HEK293 (cell line): ENCODE measurements at regions of chr9 and their contacts with region 1.

Region 1: DNA sequence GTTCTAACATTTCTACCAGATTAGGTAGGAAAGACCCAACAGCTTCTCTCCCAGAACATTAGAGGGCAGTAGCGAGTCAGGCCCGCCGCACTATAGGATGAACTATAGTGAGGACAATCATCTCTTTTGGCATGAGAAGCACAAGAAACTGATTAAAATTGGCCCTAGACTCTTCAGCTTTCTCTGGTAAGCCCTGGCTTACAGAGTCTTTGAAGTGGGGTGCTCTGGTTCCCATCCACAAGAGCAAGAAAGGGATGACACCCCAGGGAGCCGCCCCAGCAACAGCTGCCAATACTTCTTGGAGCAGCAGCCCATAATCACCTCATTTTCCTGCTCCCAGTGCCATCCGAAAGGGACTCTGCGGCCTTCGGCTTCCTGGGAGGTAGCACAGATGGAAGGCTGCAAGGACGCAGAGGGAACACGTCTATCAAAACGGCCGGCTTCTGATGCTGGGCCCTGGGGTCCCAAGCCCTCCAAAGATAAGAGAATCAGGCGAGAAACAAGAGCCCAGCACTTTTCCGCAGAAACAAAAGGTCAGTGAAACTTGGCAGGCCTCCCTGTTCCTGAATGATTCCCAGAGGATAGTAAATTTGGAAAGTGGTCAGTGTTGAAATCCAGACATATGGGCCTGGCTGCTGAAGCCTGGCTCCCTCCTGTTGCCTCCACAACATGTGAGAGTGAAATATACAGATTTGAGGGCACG is 69.3 kb downstream of the HSD17B3 start:
- H3K4me3 ChIP-seq: no peak overlapping the region
- H3K27ac ChIP-seq: no peak overlapping the region
- H3K4me1 ChIP-seq: no peaks in the 10 kb centered on the region
- CTCF ChIP-seq: 0 out of 2 replicates have a peak, but pooled peaks have one; percentile 45

Region 2: GRCh38 chr9:96177005-96177718 is 55.5 kb before region 1 on chr9:
- CTCF ChIA-PET with region 1: no interaction called
- POLR2A ChIA-PET with region 1: no interaction called
- H3K4me3 ChIP-seq: no peak overlapping the region
- H3K27ac ChIP-seq: no peak overlapping the region
- H3K4me1 ChIP-seq: no peaks in the 10 kb centered on the region
- CTCF ChIP-seq: no peak

Region 3: DNA sequence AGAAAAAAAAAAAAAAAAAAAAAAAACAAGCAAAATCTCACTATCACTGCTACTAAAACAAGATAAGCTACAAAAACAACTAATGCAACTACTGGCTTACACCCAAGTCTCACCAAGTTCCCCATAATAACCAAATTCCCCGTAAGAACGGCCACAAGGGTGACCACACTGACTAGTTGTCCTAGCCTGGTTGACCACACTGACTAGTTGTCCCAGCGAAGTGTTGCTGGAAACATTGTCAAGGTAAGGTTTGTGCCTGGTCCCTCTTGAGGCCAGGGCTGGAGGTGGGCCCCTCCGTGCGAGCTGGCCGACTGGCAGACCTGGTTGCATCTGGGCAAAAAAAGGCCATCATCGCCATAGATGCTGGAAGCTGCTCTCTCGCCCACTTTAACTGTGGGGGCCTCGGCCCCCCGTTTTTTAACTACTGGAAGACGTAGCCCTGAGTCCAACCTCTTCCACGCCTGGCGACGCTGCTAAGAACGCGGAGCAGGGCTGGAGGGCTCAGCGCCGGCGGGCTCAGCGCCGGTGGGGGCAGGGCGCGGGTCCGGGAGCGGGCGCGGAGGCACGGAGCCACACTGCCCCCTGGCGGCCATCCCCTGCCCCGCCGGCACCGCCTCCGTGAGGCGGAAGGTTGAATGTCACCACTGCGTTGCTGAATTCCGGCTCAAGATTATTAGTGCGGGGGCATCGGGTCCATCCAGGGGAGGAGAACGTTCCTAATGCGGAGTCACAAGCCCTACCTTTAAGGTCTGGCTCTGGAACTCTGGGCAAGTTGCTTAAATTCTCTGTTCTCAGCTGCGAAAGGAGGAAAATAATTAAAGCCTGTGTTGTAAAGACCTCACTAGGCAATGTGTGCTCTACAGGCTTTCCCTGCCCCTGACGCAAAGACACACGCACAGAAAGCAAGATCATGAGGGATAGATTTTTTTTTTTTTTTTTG is 14.7 kb before region 1 on chr9:
- CTCF ChIA-PET with region 1: interaction called, 10 read pairs
- POLR2A ChIA-PET with region 1: no interaction called
- H3K4me3 ChIP-seq: peak overlapping the region; percentile 2; the same call in 1 of the 2 replicates
- H3K27ac ChIP-seq: peak overlapping the region; percentile 83
- H3K4me1 ChIP-seq: peaks cover 5% of the 10 kb centered on the region; the same call in 1 of the 2 replicates
- CTCF ChIP-seq: peak; percentile 74

Region 4: DNA sequence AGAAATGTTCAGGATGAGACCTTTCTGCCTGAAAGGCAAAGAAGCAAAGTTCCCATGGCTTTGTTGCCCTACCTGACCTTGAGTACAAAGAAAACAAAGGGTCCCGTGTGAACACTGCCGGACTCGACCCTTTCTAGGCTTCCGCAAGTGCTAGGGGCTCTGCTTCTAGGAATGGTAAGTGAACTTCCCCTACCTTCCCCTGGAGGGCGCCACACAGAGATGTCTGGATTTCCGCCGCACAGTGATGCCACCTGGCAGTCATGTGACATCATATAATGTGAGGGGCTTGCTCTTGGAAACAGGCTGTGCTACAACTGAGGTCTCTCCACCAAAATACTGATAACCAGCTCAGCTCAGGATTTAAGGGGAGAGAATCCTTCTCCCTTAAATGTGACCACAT is 12.7 kb after region 1 on chr9:
- CTCF ChIA-PET with region 1: interaction called, 34 read pairs
- POLR2A ChIA-PET with region 1: no interaction called
- H3K4me3 ChIP-seq: no peak overlapping the region
- H3K27ac ChIP-seq: no peak overlapping the region
- H3K4me1 ChIP-seq: no peaks in the 10 kb centered on the region
- CTCF ChIP-seq: no peak

Region 5: DNA sequence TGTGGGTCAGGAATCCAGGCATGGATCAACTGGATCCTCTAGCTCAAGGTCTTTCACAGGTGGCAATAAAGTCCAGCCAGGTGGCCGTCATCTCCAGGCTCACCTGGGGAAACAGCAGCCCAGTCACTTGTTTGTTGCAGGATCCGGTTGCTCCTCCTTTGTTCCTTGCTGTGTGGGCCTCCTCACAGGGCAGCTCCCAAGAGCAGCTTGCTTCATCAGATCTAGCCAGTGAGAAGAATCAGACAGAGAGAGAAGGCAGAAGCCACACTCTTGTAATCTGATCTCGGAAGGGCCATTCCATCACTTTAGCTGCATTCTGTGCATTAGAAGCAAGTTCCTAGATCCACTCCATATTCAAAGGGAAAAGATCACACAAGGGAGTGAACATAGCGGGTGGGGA is 72.5 kb after region 1 on chr9:
- CTCF ChIA-PET with region 1: interaction called, 14 read pairs
- POLR2A ChIA-PET with region 1: interaction called, 3 read pairs
- H3K4me3 ChIP-seq: no peak overlapping the region
- H3K27ac ChIP-seq: no peak overlapping the region
- H3K4me1 ChIP-seq: no peaks in the 10 kb centered on the region
- CTCF ChIP-seq: no peak

Region 6: DNA sequence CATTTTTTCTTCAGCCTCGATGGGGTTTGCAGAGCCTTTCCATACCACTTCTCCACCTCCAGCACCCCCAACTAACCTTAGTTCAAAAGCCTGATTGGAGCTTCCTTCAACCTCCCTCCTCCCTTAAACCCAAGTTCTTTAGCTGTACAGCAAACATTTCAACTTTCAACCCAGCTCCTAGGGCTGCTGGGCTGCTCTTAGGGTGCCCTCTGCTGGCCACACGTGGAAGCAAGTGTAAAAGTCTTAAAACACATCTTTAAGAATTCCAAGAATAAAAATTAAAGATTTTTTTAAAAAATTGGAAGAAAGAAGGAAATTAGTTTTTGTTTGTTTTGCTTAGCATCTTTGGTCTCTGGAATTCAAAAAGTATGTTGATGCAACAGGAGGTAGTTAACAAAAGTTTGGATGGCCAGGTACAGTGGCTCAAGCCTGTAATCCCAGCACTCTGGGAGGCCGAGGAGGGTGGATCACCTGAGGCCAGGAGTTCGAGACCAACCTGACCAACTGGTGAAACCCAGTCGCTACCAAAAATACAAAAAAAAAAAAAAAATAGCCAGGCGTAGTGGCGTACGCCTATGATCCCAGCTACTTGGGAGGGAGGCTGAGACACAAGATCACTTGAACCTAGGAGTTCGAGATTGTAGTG is 84.8 kb after region 1 on chr9:
- CTCF ChIA-PET with region 1: interaction called, 28 read pairs
- POLR2A ChIA-PET with region 1: no interaction called
- H3K4me3 ChIP-seq: no peak overlapping the region
- H3K27ac ChIP-seq: no peak overlapping the region
- H3K4me1 ChIP-seq: no peaks in the 10 kb centered on the region
- CTCF ChIP-seq: peak; percentile 41

Region 7: GRCh38 chr9:96556701-96557461 is 324.2 kb after region 1 on chr9:
- CTCF ChIA-PET with region 1: no interaction called
- POLR2A ChIA-PET with region 1: no interaction called
- H3K4me3 ChIP-seq: no peak overlapping the region
- H3K27ac ChIP-seq: no peak overlapping the region
- H3K4me1 ChIP-seq: no peaks in the 10 kb centered on the region
- CTCF ChIP-seq: no peak